ENCODE measurements at regions of chr2 and their contacts with region 1.

Region 1: DNA sequence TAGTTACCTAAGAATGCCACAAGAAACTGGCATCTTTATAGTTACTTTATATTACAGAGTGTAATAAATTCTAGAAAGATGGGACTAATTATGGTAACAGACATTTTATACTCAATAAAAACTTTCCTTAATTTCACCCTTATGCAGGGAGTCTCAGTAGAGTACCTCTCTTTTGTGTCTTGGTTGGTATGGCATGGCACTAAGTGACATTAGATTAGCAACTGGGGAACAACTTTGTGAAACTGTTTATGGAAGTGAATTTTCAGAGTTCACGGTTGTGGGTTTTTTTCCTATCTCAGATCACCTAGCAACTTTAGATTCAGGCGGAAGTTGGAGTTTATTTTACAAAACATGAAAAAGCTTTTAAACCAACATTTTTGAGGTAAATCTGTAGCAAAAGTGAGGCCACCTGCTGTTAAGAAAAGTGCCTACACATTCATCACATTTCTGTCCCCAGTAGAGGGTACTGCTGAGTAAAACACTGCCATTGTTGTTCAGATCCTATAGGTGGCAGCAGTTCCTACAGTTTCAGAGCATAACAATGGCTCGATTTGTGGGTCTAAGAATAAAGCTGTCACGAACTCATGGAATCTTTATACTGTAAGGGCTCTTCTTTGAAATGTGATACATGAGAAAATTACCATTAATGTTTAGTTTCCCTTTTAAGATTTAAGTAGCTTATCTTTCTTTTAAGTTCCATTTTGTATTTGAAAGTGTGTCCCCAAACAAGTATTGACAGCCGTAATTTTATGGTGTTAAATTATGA is 117.6 kb downstream of the CAMKMT start:
- DNase-seq: peak in 27 of 42 donors; percentile 4 to 84 (median 53)

Region 2: GRCh38 chr2:44713170-44713569 is 233.9 kb after region 1 on chr2:
- intact Hi-C with region 1: loop called (anchors 5 kb)
- DNase-seq: peak in 37 of 42 donors; percentile 29 to 83 (median 59)

Region 3: GRCh38 chr2:44906972-44907371 is 427.7 kb after region 1 on chr2:
- intact Hi-C with region 1: no loop called
- DNase-seq: no peak

Region 4: GRCh38 chr2:44955593-44956392 is 476.5 kb after region 1 on chr2:
- intact Hi-C with region 1: loop called (anchors 10 kb)
- DNase-seq: peak; percentile 50 to 92 (median 86)